Caco-2 (cell line): ENCODE measurements at regions of chr4 and their contacts with region 1.

Region 1: GRCh38 chr4:37603070-37603468 is 83.1 kb downstream of the RELL1 start:
- DNase-seq: peak; percentile 82 to 89
- H3K4me3 ChIP-seq: no peak overlapping the region
- H3K4me3 Mint-ChIP-seq: peak overlapping the region; percentile 33
- H3K27ac Mint-ChIP-seq: peak overlapping the region; percentile 88
- H3K4me1 ChIP-seq: peaks cover 61% of the 10 kb centered on the region
- H3K4me1 Mint-ChIP-seq: peaks cover 59% of the 10 kb centered on the region
- H3K27me3 ChIP-seq: no peaks in the 10 kb centered on the region
- H3K27me3 Mint-ChIP-seq: no peaks in the 10 kb centered on the region
- CTCF ChIP-seq: peak; percentile 89 to 90

Region 2: DNA sequence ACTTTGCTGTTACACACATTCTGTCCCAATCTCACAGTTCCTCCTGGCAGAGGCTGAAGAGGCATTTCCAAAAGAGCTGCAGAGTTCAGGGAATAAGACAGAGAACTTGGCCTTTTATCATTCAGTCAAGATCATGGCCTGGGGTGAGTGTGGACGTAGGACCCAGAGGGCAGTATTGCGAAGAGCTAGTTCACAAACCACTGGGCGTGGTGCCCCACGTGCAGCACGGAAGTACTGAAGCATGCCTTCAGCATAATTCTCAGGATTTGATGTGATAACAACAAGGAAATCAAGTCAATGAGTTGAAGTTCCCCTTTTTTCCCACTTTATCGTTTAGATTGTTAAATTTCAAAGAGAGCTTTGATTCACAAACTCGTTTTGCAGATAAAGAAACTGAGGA is 34.6 kb before region 1 on chr4:
- CTCF ChIA-PET with region 1: no interaction called
- POLR2A ChIA-PET with region 1: interaction called, 13 read pairs
- intact Hi-C with region 1: no loop called
- DNase-seq: no peak
- H3K4me3 ChIP-seq: no peak overlapping the region
- H3K4me3 Mint-ChIP-seq: no peak overlapping the region
- H3K27ac Mint-ChIP-seq: no peak overlapping the region
- H3K4me1 ChIP-seq: no peaks in the 10 kb centered on the region
- H3K4me1 Mint-ChIP-seq: peaks cover 12% of the 10 kb centered on the region
- H3K27me3 ChIP-seq: no peaks in the 10 kb centered on the region
- H3K27me3 Mint-ChIP-seq: no peaks in the 10 kb centered on the region
- CTCF ChIP-seq: no peak

Region 3: GRCh38 chr4:37686373-37687193 is 83.5 kb after region 1 on chr4 and contains the start of gene RELL1:
- CTCF ChIA-PET with region 1: interaction called, 7 read pairs
- POLR2A ChIA-PET with region 1: interaction called, 5 read pairs
- intact Hi-C with region 1: loop called (anchors 1 kb)
- DNase-seq: peak; percentile 99 to 100
- H3K4me3 ChIP-seq: peak within 1 kb of the TSS; percentile 70
- H3K4me3 Mint-ChIP-seq: peak within 1 kb of the TSS; percentile 75
- H3K27ac Mint-ChIP-seq: peak within 1 kb of the TSS; percentile 86
- H3K4me1 ChIP-seq: peaks cover 32% of the 10 kb centered on the region
- H3K4me1 Mint-ChIP-seq: peaks cover 13% of the 10 kb centered on the region
- H3K27me3 ChIP-seq: no peaks in the 10 kb centered on the region
- H3K27me3 Mint-ChIP-seq: no peaks in the 10 kb centered on the region
- CTCF ChIP-seq: no peak
- total RNA-seq, gene RELL1: 45.3 and 48.5 TPM in 2 replicates

Region 4: GRCh38 chr4:37780444-37781150 is 177.5 kb after region 1 on chr4:
- CTCF ChIA-PET with region 1: no interaction called
- POLR2A ChIA-PET with region 1: no interaction called
- intact Hi-C with region 1: loop called (anchors 1 kb)
- DNase-seq: peak in 1 of 2 experiments; percentile 25
- H3K4me3 ChIP-seq: no peak overlapping the region
- H3K4me3 Mint-ChIP-seq: no peak overlapping the region
- H3K27ac Mint-ChIP-seq: no peak overlapping the region
- H3K4me1 ChIP-seq: peaks cover 9% of the 10 kb centered on the region; the same call in 1 of the 2 replicates
- H3K4me1 Mint-ChIP-seq: no peaks in the 10 kb centered on the region
- H3K27me3 ChIP-seq: no peaks in the 10 kb centered on the region
- H3K27me3 Mint-ChIP-seq: no peaks in the 10 kb centered on the region
- CTCF ChIP-seq: peak in 1 of 2 experiments; percentile 22

Region 5: GRCh38 chr4:37802068-37802666 is 199.1 kb after region 1 on chr4:
- CTCF ChIA-PET with region 1: interaction called, 29 read pairs
- POLR2A ChIA-PET with region 1: no interaction called
- intact Hi-C with region 1: loop called (anchors 1 kb)
- DNase-seq: peak; percentile 73 to 77
- H3K4me3 ChIP-seq: no peak overlapping the region
- H3K4me3 Mint-ChIP-seq: no peak overlapping the region
- H3K27ac Mint-ChIP-seq: no peak overlapping the region
- H3K4me1 ChIP-seq: no peaks in the 10 kb centered on the region
- H3K4me1 Mint-ChIP-seq: peaks cover 18% of the 10 kb centered on the region
- H3K27me3 ChIP-seq: no peaks in the 10 kb centered on the region
- H3K27me3 Mint-ChIP-seq: no peaks in the 10 kb centered on the region
- CTCF ChIP-seq: peak; percentile 59 to 80